GM23248 (cell line): ENCODE measurements at regions of chr12 and their contacts with region 1.

Region 1: GRCh38 chr12:106386813-106387535 is 29.4 kb downstream of the POLR3B start:
- DNase-seq: peak; percentile 40
- H3K4me3 ChIP-seq: no peak overlapping the region
- H3K27ac ChIP-seq: no peak overlapping the region
- H3K4me1 ChIP-seq: no peaks in the 10 kb centered on the region
- H3K27me3 ChIP-seq: no peaks in the 10 kb centered on the region

Region 2: GRCh38 chr12:106814714-106815113 is 427.7 kb after region 1 on chr12:
- in situ Hi-C with region 1: no loop called
- DNase-seq: no peak
- H3K4me3 ChIP-seq: no peak overlapping the region
- H3K27ac ChIP-seq: no peak overlapping the region
- H3K4me1 ChIP-seq: no peaks in the 10 kb centered on the region
- H3K27me3 ChIP-seq: no peaks in the 10 kb centered on the region

Region 3: GRCh38 chr12:106841510-106842302 is 454.7 kb after region 1 on chr12:
- in situ Hi-C with region 1: loop called (anchors 25 kb)
- DNase-seq: peak; percentile 69
- H3K4me3 ChIP-seq: no peak overlapping the region
- H3K27ac ChIP-seq: peak overlapping the region; percentile 20; the same call in 1 of the 2 replicates
- H3K4me1 ChIP-seq: peaks cover 20% of the 10 kb centered on the region
- H3K27me3 ChIP-seq: no peaks in the 10 kb centered on the region

Region 4: DNA sequence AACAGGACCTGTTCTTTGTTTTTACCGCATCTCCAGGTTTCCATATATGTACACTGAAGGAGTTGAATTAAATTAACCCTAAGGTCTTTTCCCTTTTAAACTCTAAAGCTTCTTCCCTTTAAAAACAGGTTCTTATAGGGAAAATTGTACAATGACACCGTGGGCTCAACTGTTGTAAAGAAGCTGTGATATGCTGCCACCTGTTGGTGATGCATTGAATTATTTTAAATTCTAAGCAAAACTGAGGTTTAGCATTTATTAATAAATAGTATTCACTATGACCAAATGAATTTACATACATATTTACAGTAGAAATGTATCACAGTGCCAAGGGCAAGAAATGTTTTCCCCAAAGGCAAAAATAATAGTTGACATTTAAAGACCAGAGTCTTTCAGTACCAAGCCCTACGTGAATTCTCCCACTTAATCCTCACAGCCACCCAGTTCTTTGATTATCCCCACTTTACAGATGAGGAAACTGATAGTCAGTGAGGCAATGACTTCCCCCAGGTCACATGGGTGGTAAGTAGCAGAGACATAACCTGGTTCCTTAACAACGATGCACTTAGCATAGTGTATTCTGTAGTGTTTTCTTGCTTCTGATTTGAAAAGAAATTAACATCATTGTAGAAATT is 533.1 kb after region 1 on chr12:
- in situ Hi-C with region 1: loop called (anchors 10 kb)
- DNase-seq: peak; percentile 69
- H3K4me3 ChIP-seq: no peak overlapping the region
- H3K27ac ChIP-seq: no peak overlapping the region
- H3K4me1 ChIP-seq: no peaks in the 10 kb centered on the region
- H3K27me3 ChIP-seq: no peaks in the 10 kb centered on the region

Region 5: GRCh38 chr12:106955377-106956047 is 568.5 kb after region 1 on chr12 and contains the start of gene TMEM263:
- in situ Hi-C with region 1: no loop called
- DNase-seq: peak; percentile 98
- H3K4me3 ChIP-seq: peak within 1 kb of the TSS; percentile 97
- H3K27ac ChIP-seq: peak within 1 kb of the TSS; percentile 99
- H3K4me1 ChIP-seq: peaks cover 28% of the 10 kb centered on the region
- H3K27me3 ChIP-seq: no peaks in the 10 kb centered on the region
- total RNA-seq, gene TMEM263: 132 and 147 TPM in 2 replicates